HepG2 (cell line): ENCODE measurements at regions of chr20 and their contacts with region 1.

Region 1: GRCh38 chr20:2978519-2978918 is 64.9 kb upstream of the GNRH2 start:
- DNase-seq: no peak
- ATAC-seq: no peak
- H3K4me3 ChIP-seq: no peak overlapping the region
- H3K27ac ChIP-seq: no peak overlapping the region
- H3K4me1 ChIP-seq: peaks cover 10% of the 10 kb centered on the region
- H3K27me3 ChIP-seq: no peaks in the 10 kb centered on the region
- CTCF ChIP-seq: no peak
- EP300 ChIP-seq: no peak
- POLR2A ChIP-seq: no peak
- RAD21 ChIP-seq: no peak

Region 2: GRCh38 chr20:2919518-2920245 is 58.8 kb before region 1 on chr20:
- CTCF ChIA-PET with region 1: no interaction called
- POLR2A ChIA-PET with region 1: no interaction called
- in situ Hi-C with region 1: loop called (anchors 5 kb)
- intact Hi-C with region 1: loop called (anchors 1 kb)
- DNase-seq: no peak
- ATAC-seq: peak; percentile 50; the same call in 2 of the 3 replicates
- H3K4me3 ChIP-seq: no peak overlapping the region
- H3K27ac ChIP-seq: no peak overlapping the region
- H3K4me1 ChIP-seq: peaks cover 30% of the 10 kb centered on the region
- H3K27me3 ChIP-seq: no peaks in the 10 kb centered on the region
- CTCF ChIP-seq: no peak
- EP300 ChIP-seq: no peak
- POLR2A ChIP-seq: no peak
- RAD21 ChIP-seq: no peak

Region 3: GRCh38 chr20:3045816-3046676 is 67.5 kb after region 1 on chr20 and contains the start of gene MRPS26:
- CTCF ChIA-PET with region 1: no interaction called
- POLR2A ChIA-PET with region 1: no interaction called
- in situ Hi-C with region 1: no loop called
- intact Hi-C with region 1: no loop called
- DNase-seq: peak; percentile 91
- ATAC-seq: peak; percentile 95
- H3K4me3 ChIP-seq: peak within 1 kb of the TSS; percentile 89 to 97 (median 95)
- H3K27ac ChIP-seq: peak within 1 kb of the TSS; percentile 85
- H3K4me1 ChIP-seq: peaks cover 42% of the 10 kb centered on the region
- H3K27me3 ChIP-seq: no peaks in the 10 kb centered on the region; a peak in 1 of 5 replicates
- CTCF ChIP-seq: peak; percentile 57
- EP300 ChIP-seq: peak in 1 of 2 experiments; percentile 2; a peak in 1 of 4 replicates
- POLR2A ChIP-seq: peak; percentile 77 to 94
- RAD21 ChIP-seq: peak; percentile 65
- total RNA-seq, gene MRPS26: 187 and 201 TPM in 2 replicates